ENCODE measurements at regions of chr1 and their contacts with region 1.

Region 1: DNA sequence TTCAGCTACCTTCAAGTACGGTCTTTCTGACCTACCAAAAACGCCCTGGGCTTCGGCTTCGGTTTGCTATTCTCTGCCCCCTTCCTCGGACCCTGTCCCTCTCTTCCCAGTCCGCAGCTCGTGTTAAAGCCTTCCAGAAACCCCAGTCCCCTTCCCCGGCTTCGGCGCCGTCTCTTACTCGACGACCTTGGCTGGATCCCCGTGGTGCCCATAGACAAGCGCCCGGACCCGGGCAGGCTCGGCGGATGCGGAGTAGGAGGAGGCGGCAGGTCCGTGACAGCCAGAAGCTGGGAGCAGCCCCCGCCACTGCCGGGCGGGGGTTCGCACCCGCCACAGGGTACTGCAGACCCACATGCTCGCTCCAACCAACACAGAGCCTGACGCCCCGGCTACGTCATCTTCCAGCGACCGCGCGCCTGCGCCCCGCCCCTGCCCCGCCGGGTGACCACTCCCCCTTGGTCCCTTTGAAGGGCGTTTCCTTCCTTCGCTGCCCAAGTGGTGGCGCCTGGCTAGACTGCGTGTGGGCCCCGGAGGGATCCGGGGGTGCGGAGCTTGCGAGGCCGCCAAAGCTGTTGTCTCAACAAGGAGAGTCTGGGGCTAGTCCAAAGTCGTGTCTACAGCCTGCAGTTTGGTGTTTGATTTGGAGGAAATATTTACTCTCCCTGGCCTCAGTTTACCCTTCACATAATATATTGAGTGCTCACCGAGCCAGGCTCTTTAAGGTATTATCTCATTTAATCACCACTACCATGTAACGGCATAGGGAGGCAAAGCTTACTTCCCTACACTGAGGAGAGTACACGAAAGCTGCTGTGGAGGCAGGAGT is at the start of gene MECR:
- DNase-seq: peak; percentile 61 to 93
- H3K4me3 ChIP-seq: peak within 1 kb of the TSS; percentile 93
- H3K27ac ChIP-seq: peak within 1 kb of the TSS; percentile 34; the same call in 1 of the 2 replicates
- H3K4me1 ChIP-seq: peaks cover 39% of the 10 kb centered on the region
- H3K27me3 ChIP-seq: no peaks in the 10 kb centered on the region
- CTCF ChIP-seq: no peak; the same call in 1 of the 2 replicates
- total RNA-seq, gene MECR: 46.4 and 53.9 TPM in 2 replicates

Region 2: DNA sequence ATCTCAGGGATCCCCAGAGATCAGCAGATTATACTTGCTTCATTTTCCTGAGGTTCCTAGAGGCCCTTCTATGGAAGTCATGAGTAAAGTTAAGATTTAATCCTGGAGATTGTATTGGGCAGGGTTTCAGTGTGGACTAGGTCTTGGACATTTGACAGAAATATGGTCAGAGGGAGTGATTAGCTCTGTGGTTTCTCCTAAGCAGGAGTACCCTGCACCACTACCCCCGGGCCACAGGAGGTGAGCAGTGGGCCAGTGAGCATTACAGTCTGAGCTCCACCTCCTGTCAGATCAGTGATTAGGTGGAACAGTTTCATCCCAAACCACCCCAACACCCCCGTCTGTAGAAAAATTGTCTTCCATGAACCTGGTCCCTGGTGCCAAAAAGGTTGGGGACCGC is 818.0 kb before region 1 on chr1:
- CTCF ChIA-PET with region 1: no interaction called
- POLR2A ChIA-PET with region 1: interaction called, 26 read pairs
- intact Hi-C with region 1: no loop called
- DNase-seq: no peak
- H3K4me3 ChIP-seq: no peak overlapping the region
- H3K27ac ChIP-seq: no peak overlapping the region
- H3K4me1 ChIP-seq: peaks cover 13% of the 10 kb centered on the region
- H3K27me3 ChIP-seq: no peaks in the 10 kb centered on the region
- CTCF ChIP-seq: no peak

Region 3: GRCh38 chr1:29171089-29171488 is 59.7 kb before region 1 on chr1:
- CTCF ChIA-PET with region 1: no interaction called
- POLR2A ChIA-PET with region 1: no interaction called
- intact Hi-C with region 1: no loop called
- DNase-seq: no peak
- H3K4me3 ChIP-seq: no peak overlapping the region
- H3K27ac ChIP-seq: no peak overlapping the region
- H3K4me1 ChIP-seq: no peaks in the 10 kb centered on the region
- H3K27me3 ChIP-seq: no peaks in the 10 kb centered on the region
- CTCF ChIP-seq: no peak

Region 4: GRCh38 chr1:29444782-29445729 is 214.3 kb after region 1 on chr1:
- CTCF ChIA-PET with region 1: no interaction called
- POLR2A ChIA-PET with region 1: no interaction called
- intact Hi-C with region 1: loop called (anchors 10 kb)
- DNase-seq: no peak
- H3K4me3 ChIP-seq: no peak overlapping the region
- H3K27ac ChIP-seq: no peak overlapping the region
- H3K4me1 ChIP-seq: no peaks in the 10 kb centered on the region
- H3K27me3 ChIP-seq: peaks cover 30% of the 10 kb centered on the region
- CTCF ChIP-seq: no peak

Region 5: DNA sequence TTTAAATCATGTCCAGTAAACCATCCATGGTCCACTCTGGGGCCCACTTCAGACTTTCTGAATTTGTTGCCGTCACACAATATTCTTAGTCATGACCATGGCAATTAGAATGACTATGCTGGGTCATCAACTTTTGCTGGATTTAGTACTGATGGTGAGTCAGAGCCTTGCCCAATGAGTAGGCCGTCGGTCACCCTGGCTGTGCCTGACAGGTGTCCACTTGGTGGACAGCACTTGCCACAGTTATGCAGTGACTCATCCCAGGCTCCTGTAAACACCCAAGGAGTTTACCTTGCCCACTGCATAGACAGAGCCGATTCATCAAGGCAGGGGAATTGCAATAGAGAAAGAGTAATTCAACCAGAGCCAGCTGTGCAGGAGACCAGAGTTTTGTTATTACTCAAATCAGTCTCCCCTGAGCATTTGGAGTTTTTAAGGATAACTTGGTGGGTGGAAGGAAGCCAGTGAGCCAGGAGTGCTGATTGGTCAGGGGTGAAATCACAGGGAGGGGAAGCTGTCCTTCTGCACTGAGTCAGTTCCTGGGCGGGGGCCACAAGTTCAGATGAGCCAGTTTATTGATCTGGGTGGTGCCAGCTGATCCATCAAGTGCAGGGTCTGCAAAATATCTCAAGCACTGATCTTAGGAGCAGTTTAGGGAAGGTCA is 339.3 kb after region 1 on chr1:
- CTCF ChIA-PET with region 1: no interaction called
- POLR2A ChIA-PET with region 1: no interaction called
- intact Hi-C with region 1: loop called (anchors 10 kb)
- DNase-seq: peak; percentile 88 to 97
- H3K4me3 ChIP-seq: no peak overlapping the region
- H3K27ac ChIP-seq: peak overlapping the region; percentile 55
- H3K4me1 ChIP-seq: peaks cover 32% of the 10 kb centered on the region
- H3K27me3 ChIP-seq: no peaks in the 10 kb centered on the region
- CTCF ChIP-seq: no peak

Region 6: DNA sequence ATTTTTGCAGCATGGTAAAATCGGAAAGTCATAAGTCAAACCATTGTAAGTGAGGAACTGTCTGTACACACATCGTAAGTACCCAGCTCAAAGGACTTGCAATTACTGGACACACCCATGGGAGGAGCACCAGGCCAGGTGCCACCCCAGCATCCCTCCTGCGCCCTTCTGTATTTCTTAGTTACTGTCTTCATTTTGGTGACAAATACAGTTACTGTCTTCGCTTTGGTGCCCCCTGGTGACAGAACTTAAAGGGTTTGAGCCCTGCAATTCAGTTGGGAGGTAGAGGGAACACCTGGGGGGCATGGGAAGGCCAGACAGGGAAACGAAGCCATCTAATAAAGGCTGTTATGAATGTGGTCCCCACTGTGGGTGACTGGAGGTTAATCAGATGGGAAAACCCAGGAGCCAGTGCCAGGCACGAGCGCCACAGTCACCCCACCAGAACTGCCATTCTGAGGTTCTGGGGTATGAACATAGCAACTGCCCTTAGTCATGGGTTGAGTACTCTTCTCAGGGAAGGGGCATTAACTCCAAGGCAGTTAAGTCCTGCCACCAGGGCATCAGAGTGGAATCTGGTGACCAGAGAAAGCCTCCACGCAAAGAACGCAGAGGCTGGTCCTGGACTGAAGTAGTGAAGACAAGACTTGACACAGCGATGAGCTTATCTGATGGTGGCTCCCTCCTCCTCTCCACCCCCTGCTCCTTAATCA is 618.4 kb after region 1 on chr1:
- CTCF ChIA-PET with region 1: no interaction called
- POLR2A ChIA-PET with region 1: no interaction called
- intact Hi-C with region 1: loop called (anchors 10 kb)
- DNase-seq: peak; percentile 33 to 40
- H3K4me3 ChIP-seq: no peak overlapping the region
- H3K27ac ChIP-seq: no peak overlapping the region
- H3K4me1 ChIP-seq: no peaks in the 10 kb centered on the region
- H3K27me3 ChIP-seq: peaks cover 6% of the 10 kb centered on the region; the same call in 1 of the 2 replicates
- CTCF ChIP-seq: peak; percentile 65

Region 7: DNA sequence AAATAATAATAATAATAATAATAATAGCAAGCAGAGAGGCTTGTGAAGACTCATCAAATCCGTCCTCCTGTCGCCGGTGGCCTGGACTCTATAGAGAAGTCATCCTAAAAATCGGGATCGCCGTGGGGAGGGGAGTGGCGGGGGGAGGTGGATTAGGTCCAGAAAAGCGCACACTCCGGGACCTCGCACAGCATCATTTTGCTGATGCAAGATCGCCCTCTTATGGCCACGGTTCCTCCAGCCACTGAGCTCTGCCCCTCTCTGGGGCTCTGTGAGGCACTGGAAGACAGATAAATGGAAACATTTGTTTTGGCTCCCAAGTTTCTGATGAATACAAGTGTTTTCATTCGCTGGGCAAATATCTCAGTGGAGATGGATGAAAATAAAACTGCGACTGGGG is 880.7 kb after region 1 on chr1:
- CTCF ChIA-PET with region 1: no interaction called
- POLR2A ChIA-PET with region 1: no interaction called
- intact Hi-C with region 1: loop called (anchors 10 kb)
- DNase-seq: peak in 1 of 2 experiments; percentile 38
- H3K4me3 ChIP-seq: no peak overlapping the region
- H3K27ac ChIP-seq: no peak overlapping the region
- H3K4me1 ChIP-seq: no peaks in the 10 kb centered on the region
- H3K27me3 ChIP-seq: peaks cover 53% of the 10 kb centered on the region
- CTCF ChIP-seq: peak; percentile 57